Colonic mucosa (tissue), 4 donors: ENCODE measurements at regions of chr7 and their contacts with region 1.

Region 1: GRCh38 chr7:114070244-114070643 is 151.4 kb upstream of the PPP1R3A start:
- DNase-seq: no peak
- H3K4me3 ChIP-seq: no peak overlapping the region
- H3K27ac ChIP-seq: no peak overlapping the region
- H3K4me1 ChIP-seq: no peaks in the 10 kb centered on the region
- H3K27me3 ChIP-seq: no peaks in the 10 kb centered on the region
- CTCF ChIP-seq: no peak

Region 2: GRCh38 chr7:113730309-113730955 is 339.8 kb before region 1 on chr7:
- intact Hi-C with region 1: no loop called
- DNase-seq: no peak
- H3K4me3 ChIP-seq: no peak overlapping the region
- H3K27ac ChIP-seq: no peak overlapping the region
- H3K4me1 ChIP-seq: no peaks in the 10 kb centered on the region
- H3K27me3 ChIP-seq: no peaks in the 10 kb centered on the region
- CTCF ChIP-seq: no peak

Region 3: GRCh38 chr7:114026486-114027089 is 43.7 kb before region 1 on chr7:
- intact Hi-C with region 1: loop called (anchors 10 kb)
- DNase-seq: no peak
- H3K4me3 ChIP-seq: no peak overlapping the region
- H3K27ac ChIP-seq: no peak overlapping the region
- H3K4me1 ChIP-seq: no peaks in the 10 kb centered on the region
- H3K27me3 ChIP-seq: no peaks in the 10 kb centered on the region
- CTCF ChIP-seq: peak; percentile 59

Region 4: DNA sequence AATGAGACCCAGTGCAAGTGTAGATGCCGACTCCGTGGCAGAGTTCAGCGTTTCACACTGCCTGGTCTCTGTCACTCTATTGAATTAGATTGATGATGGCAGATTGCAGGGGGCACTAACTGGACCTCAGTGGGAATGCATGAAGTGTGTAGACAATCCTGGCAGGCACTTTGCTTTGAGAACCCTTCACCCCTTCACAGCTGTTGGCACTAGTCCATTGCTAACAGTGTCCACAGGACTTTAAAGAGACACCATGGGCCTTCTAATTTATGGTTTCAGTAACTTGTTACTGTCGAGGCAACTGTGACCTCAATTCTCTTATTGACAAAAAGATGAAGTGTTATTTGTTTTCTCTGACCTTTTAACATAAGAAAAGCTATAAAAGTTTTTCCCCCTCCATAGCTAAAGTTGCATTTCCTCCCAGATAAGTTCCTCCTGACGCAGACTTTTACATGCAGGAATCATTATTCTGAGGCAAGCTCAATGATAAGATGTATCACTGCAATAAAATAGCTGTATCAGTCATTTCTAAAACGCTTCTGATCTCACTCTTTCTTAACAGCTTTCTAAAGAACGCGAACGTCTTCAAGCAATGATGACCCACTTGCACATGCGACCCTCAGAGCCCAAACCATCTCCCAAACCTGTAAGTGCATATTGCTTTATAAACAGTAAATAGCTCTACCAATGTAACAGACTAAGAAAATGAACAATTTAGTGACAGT is 583.3 kb after region 1 on chr7:
- intact Hi-C with region 1: loop called (anchors 10 kb)
- DNase-seq: no peak
- H3K4me3 ChIP-seq: no peak overlapping the region
- H3K27ac ChIP-seq: no peak overlapping the region
- H3K4me1 ChIP-seq: no peaks in the 10 kb centered on the region
- H3K27me3 ChIP-seq: no peaks in the 10 kb centered on the region
- CTCF ChIP-seq: no peak